Activated CD4-positive, alpha-beta memory T cell treated with anti-CD3 and anti-CD28 coated beads for 36 hours (primary cell): ENCODE measurements at regions of chr6 and their contacts with region 1.

Region 1: DNA sequence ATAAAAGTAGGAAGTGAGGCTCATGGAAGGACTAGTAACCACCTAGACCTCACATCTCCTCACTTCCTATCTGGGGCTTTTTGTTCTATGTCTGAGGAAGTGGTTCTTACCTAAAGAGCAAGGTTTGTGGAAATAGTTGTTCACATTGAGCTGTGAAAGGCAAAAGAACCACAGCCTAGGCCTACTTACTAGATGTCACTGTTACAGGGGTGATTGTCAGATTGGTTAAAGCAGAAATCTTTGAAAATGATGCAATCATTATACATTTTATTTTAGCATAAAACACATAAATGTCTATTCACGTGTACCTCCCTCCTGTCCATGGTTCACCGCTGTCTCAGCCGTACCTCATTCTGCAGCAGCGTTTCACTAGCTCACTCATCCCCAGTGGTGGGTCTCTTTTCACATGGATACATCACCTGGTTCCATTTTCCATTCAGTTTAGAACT is 268.8 kb downstream of the TMEM242 start:
- DNase-seq: peak; percentile 59
- H3K4me3 Mint-ChIP-seq: no peak overlapping the region
- H3K27ac Mint-ChIP-seq: peak overlapping the region; percentile 91
- H3K4me1 Mint-ChIP-seq: peaks cover 39% of the 10 kb centered on the region
- H3K27me3 Mint-ChIP-seq: no peaks in the 10 kb centered on the region

Region 2: DNA sequence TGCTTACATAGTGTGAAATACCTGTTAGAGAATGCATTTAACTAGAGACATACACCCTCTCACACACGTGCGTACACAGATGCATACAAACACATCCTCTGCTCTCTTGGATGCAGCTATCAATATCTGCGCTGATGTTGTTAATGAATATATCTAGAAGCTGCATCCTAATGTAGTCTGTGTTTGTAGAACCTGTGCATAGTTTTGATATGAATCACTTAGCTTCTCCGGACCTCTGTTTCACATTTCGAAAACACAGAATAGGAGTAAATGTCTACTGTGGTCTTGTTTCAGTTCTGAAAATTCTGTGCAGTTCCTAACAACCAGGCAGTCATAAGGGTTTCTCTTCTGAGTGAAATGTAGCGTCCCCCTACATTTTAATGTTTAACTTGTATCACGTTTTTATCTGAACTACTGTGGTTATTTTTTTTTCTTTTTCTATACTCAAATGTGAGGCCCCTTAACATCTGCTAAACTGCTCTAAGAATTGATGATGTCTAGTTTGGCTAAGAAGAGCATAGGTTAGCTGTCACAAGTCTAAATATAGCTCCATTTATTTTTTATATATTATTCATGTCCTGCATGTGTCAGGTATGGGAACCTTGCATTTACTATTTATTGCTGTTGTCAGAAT is 14.3 kb after region 1 on chr6:
- CTCF ChIA-PET with region 1: interaction called, 7 read pairs
- POLR2A ChIA-PET with region 1: interaction called, 20 read pairs
- intact Hi-C with region 1: loop called (anchors 1 kb)
- DNase-seq: no peak
- H3K4me3 Mint-ChIP-seq: peak overlapping the region; percentile 18
- H3K27ac Mint-ChIP-seq: peak overlapping the region; percentile 49
- H3K4me1 Mint-ChIP-seq: peaks cover 47% of the 10 kb centered on the region
- H3K27me3 Mint-ChIP-seq: no peaks in the 10 kb centered on the region

Region 3: GRCh38 chr6:157075549-157076450 is 21.2 kb after region 1 on chr6:
- CTCF ChIA-PET with region 1: interaction called, 3 read pairs
- POLR2A ChIA-PET with region 1: no interaction called
- intact Hi-C with region 1: loop called (anchors 1 kb)
- DNase-seq: peak; percentile 55
- H3K4me3 Mint-ChIP-seq: peak overlapping the region; percentile 71
- H3K27ac Mint-ChIP-seq: peak overlapping the region; percentile 91
- H3K4me1 Mint-ChIP-seq: peaks cover 41% of the 10 kb centered on the region
- H3K27me3 Mint-ChIP-seq: no peaks in the 10 kb centered on the region